ENCODE measurements at regions of chr5 and their contacts with region 1.

Region 1: DNA sequence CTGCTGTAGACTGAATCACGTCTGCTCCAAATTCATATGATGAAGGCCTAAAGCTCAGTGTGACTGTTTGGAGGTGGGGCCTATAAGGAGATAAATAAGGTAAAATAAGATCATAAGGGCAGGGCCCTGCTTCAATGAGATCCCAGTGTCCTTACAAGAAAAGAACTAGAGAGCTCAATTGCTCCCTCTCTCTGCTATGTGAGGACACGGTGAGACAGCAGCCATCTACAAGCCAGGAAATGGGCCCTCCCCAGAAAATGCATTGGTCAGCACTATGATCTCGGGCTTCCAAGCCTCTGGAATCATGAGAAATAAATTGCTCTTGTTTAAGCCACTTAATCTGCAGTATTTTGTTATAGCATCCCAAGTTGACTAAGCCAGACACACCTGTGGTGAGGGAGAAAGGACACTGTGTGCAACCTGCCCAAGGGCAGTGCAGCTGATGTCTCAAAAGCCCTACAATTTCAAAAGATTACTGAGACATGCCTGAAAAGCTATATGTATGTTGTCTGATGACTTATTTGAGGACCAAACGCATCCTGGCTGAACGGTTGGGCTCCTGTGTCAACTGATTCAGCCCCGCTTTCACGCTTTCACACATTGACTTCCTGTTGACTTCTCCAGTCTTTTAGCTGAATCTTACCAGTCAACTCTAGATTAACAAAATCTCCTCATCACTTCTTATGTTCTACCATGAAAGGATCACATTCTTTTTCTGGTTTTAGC is 13.2 kb downstream of the GZMK start:
- DNase-seq: peak; percentile 89
- ATAC-seq: peak; percentile 94
- H3K4me3 Mint-ChIP-seq: peak overlapping the region; percentile 13
- H3K27ac Mint-ChIP-seq: peak overlapping the region; percentile 84
- H3K4me1 Mint-ChIP-seq: peaks cover 37% of the 10 kb centered on the region
- H3K27me3 Mint-ChIP-seq: no peaks in the 10 kb centered on the region
- CTCF ChIP-seq: no peak

Region 2: GRCh38 chr5:55021410-55021809 is 15.8 kb before region 1 on chr5:
- CTCF ChIA-PET with region 1: interaction called, 34 read pairs
- POLR2A ChIA-PET with region 1: interaction called, 20 read pairs
- intact Hi-C with region 1: no loop called
- DNase-seq: no peak
- ATAC-seq: no peak
- H3K4me3 Mint-ChIP-seq: no peak overlapping the region
- H3K27ac Mint-ChIP-seq: peak overlapping the region; percentile 6
- H3K4me1 Mint-ChIP-seq: peaks cover 35% of the 10 kb centered on the region
- H3K27me3 Mint-ChIP-seq: no peaks in the 10 kb centered on the region
- CTCF ChIP-seq: no peak